ENCODE measurements at regions of chr11 and their contacts with region 1.

Region 1: DNA sequence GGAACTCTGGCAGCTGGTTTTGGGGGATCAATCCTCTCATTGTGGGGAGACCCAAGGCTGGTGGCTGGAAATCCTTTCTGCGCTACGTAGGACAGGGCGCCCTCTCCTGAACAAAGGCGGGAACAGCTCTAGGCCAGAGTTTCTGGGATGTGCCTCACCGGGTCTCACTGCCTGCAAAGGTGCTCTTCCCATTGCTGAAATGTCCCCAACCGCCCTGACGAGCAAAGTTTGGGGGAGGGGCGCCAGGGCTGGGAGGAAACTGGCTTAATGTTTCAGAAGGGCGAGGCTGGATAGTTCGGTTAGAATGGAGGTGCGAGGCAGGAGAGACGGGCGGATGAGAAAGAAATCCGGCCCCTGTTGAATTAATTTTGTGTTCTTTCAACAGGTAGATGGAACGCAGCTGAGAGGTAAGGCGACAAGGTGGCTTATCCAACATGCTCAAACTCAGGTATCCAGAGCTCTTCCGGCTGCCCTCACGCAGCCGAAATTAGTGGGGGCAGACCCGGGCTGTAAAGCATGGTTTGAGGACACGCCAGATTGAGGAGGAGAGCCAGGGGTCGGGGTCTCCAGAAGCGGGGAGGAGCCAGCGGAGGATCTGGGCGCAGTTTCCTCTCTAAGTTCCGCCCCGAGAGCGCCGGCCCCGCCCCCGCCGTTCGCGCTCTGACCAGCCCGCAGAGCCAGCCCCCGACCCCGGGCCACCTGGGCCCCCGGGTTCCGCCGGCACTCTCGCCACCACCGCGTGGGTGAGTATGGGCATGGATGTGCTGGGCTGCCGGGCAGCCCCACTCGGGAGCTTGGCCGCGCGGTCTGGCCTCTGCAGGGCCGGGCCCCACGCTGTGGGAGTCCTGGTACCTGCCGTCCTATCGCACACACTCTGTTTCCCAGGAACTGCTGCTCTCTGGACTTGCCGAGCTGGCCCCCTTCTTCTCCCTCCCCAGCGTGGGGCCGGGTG is at the start of gene PGAP2:
- DNase-seq: peak; percentile 77
- H3K4me3 Mint-ChIP-seq: peak within 1 kb of the TSS; percentile 81
- H3K27ac Mint-ChIP-seq: peak within 1 kb of the TSS; percentile 61
- H3K4me1 Mint-ChIP-seq: peaks cover 15% of the 10 kb centered on the region
- H3K27me3 Mint-ChIP-seq: no peaks in the 10 kb centered on the region
- CTCF ChIP-seq: peak; percentile 44
- total RNA-seq, gene PGAP2: 27.2 and 28.2 TPM in 2 replicates

Region 2: GRCh38 chr11:3609416-3610265 is 198.5 kb before region 1 on chr11:
- CTCF ChIA-PET with region 1: interaction called, 10 read pairs
- POLR2A ChIA-PET with region 1: no interaction called
- intact Hi-C with region 1: no loop called
- DNase-seq: peak; percentile 51
- H3K4me3 Mint-ChIP-seq: no peak overlapping the region
- H3K27ac Mint-ChIP-seq: no peak overlapping the region
- H3K4me1 Mint-ChIP-seq: peaks cover 2% of the 10 kb centered on the region
- H3K27me3 Mint-ChIP-seq: peaks cover 6% of the 10 kb centered on the region
- CTCF ChIP-seq: peak; percentile 83

Region 3: DNA sequence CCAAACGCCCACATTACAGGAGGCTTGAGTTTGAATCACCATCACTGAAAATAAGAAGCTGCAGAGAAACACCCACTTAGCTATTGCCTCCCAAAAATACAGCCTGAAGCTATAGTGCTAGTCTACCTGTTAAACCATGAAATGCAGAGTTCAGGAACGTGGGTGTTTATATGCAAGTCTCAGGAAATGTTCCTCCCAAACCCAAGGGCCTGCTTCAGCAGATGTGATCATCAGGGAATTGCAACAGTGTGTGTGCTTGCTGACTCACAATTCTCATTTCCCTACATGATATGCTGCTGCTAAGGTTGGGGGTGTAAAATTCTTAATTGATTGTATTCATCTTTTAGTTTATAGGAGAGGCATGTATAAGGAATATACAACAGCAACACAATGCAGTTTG is 60.5 kb before region 1 on chr11:
- CTCF ChIA-PET with region 1: no interaction called
- POLR2A ChIA-PET with region 1: interaction called, 3 read pairs
- intact Hi-C with region 1: loop called (anchors 2 kb)
- DNase-seq: peak; percentile 87
- H3K4me3 Mint-ChIP-seq: peak overlapping the region; percentile 25
- H3K27ac Mint-ChIP-seq: peak overlapping the region; percentile 42
- H3K4me1 Mint-ChIP-seq: peaks cover 8% of the 10 kb centered on the region
- H3K27me3 Mint-ChIP-seq: no peaks in the 10 kb centered on the region
- CTCF ChIP-seq: no peak

Region 4: GRCh38 chr11:3797329-3798095 is 10.7 kb before region 1 on chr11 and contains the start of gene NUP98:
- CTCF ChIA-PET with region 1: interaction called, 43 read pairs
- POLR2A ChIA-PET with region 1: interaction called, 61 read pairs
- intact Hi-C with region 1: no loop called
- DNase-seq: peak; percentile 100
- H3K4me3 Mint-ChIP-seq: peak within 1 kb of the TSS; percentile 86
- H3K27ac Mint-ChIP-seq: peak within 1 kb of the TSS; percentile 93
- H3K4me1 Mint-ChIP-seq: peaks cover 9% of the 10 kb centered on the region
- H3K27me3 Mint-ChIP-seq: no peaks in the 10 kb centered on the region
- CTCF ChIP-seq: no peak
- total RNA-seq, gene NUP98: 79.4 and 83.7 TPM in 2 replicates

Region 5: GRCh38 chr11:3834664-3835461 is 26.7 kb after region 1 on chr11:
- CTCF ChIA-PET with region 1: interaction called, 14 read pairs
- POLR2A ChIA-PET with region 1: interaction called, 3 read pairs
- intact Hi-C with region 1: no loop called
- DNase-seq: no peak
- H3K4me3 Mint-ChIP-seq: no peak overlapping the region
- H3K27ac Mint-ChIP-seq: peak overlapping the region; percentile 82
- H3K4me1 Mint-ChIP-seq: peaks cover 45% of the 10 kb centered on the region
- H3K27me3 Mint-ChIP-seq: no peaks in the 10 kb centered on the region
- CTCF ChIP-seq: no peak

Region 6: DNA sequence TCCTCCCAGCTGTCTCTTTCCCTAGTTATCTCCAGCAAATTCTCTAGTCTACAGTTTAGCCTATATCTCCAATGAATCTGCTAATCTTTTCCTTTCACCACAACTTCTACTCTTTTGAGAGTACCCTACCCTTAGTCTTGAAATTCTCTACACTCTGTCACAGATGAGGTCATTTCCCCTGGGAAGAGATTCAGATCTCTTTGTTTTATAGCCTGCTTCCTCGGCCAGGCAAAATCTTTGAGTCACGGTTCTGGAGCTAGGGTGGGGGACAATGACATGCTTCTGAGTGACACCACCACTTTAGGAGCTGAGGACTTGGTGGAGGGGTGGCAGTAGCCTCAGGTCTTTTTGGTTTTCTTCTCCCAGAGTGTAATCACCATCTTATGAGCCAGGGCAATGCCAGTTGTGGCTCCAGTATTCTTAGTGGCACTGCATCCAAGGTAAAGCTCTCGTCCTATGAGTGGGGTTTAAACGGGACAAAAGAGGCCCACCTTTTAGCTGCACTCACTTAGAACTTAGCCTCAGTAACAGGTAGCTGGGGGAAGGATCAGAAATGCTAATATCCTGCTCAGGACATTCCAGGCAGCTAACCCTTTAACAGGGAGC is 187.9 kb after region 1 on chr11:
- CTCF ChIA-PET with region 1: no interaction called
- POLR2A ChIA-PET with region 1: no interaction called
- intact Hi-C with region 1: no loop called
- DNase-seq: no peak
- H3K4me3 Mint-ChIP-seq: no peak overlapping the region
- H3K27ac Mint-ChIP-seq: no peak overlapping the region
- H3K4me1 Mint-ChIP-seq: no peaks in the 10 kb centered on the region
- H3K27me3 Mint-ChIP-seq: no peaks in the 10 kb centered on the region
- CTCF ChIP-seq: no peak